ENCODE measurements at regions of chr18 and their contacts with region 1.

Region 1: DNA sequence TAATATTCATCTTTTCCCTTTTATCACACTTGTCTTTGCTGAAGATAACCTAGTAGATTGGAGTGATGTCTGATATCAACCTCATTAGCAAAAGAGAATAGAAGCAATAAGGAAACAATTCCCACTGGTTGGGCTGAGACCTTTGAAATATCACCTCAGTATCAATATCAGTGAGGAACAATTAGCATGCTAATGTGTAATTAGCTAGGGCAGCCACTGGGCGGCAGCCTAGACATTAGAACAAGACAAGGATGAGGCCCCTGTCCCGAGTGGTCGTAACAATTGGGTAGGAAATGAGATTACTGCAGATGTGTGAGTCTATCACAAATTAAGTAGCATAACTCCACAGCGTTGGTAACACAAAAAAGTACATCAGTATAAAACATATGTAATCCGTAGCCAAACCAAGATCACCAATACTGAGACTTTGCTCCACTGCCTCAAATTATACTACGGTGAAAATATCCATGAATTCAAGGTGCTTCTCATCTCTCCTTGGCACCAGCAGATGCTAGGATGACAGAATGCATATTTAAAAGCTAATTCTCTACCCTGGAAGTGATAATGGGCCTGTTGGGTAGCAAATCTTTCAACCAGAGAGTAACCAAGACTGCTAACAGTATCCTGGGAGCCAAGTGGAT is 99.1 kb downstream of the ALPK2 start:
- DNase-seq: peak in 2 of 4 donors; percentile 27 to 54
- ATAC-seq: peak; percentile 87
- H3K4me3 ChIP-seq: no peak overlapping the region
- H3K27ac ChIP-seq: no peak overlapping the region
- H3K4me1 ChIP-seq: peaks cover 0 to under 1% of the 10 kb centered on the region in 2 donors
- H3K27me3 ChIP-seq: peaks cover 0 to 3% of the 10 kb centered on the region in 2 donors
- CTCF ChIP-seq: peak; percentile 62 to 90

Region 2: GRCh38 chr18:58669731-58670378 is 140.0 kb after region 1 on chr18:
- intact Hi-C with region 1: loop called in 1 of 2 experiments (anchors 10 kb)
- DNase-seq: peak in 2 of 4 donors; percentile 8 to 57
- ATAC-seq: peak; percentile 35
- H3K4me3 ChIP-seq: no peak overlapping the region
- H3K27ac ChIP-seq: peak overlapping the region; percentile 97
- H3K4me1 ChIP-seq: peaks cover 19 to 34% of the 10 kb centered on the region in 2 donors
- H3K27me3 ChIP-seq: no peaks in the 10 kb centered on the region
- CTCF ChIP-seq: no peak

Region 3: DNA sequence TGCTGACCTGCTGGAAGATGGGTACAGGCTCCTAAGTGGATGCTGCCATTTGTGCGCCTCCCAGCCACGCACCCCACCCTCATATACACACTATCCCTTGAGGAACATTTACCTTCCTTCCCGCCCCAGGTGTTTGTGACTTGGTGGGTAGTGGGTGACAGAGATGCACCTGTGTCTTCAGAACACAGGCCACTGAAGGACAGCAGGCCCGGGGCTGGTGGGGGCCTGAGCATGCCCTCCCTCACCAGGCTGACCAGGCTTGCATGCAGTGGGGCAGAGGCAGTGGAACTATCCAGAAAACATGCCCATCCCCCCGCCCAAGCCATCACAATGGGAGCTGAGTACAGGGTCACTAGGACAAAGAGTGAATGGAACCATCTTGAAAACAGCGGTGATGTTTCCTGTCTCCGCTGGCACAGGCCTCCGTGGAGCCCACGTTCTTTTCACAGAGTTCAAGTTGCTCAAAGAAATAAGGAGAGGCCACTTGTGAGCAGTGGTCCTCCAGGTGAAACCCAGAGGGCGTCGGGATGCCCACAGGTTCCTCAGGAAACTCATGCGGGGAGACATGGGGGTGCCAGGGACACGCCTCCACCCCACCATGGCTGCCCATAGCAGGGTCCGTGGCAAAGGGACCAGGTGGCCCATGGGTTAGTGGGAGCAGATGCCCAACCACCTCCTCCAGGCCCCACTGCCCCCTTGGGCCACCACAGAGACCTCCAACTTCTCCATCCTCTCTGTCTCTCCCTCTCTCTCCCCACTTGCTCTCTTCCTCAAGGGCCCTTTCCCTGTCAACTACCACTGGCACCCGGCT is 232.3 kb after region 1 on chr18:
- intact Hi-C with region 1: loop called in 1 of 2 experiments (anchors 2 kb)
- DNase-seq: no peak
- ATAC-seq: no peak
- H3K4me3 ChIP-seq: no peak overlapping the region
- H3K27ac ChIP-seq: no peak overlapping the region
- H3K4me1 ChIP-seq: no peaks in the 10 kb centered on the region
- H3K27me3 ChIP-seq: peaks cover 0 to 47% of the 10 kb centered on the region in 2 donors
- CTCF ChIP-seq: no peak